CD4-positive, alpha-beta memory T cell (primary cell): ENCODE measurements at regions of chr15 and their contacts with region 1.

Region 1: DNA sequence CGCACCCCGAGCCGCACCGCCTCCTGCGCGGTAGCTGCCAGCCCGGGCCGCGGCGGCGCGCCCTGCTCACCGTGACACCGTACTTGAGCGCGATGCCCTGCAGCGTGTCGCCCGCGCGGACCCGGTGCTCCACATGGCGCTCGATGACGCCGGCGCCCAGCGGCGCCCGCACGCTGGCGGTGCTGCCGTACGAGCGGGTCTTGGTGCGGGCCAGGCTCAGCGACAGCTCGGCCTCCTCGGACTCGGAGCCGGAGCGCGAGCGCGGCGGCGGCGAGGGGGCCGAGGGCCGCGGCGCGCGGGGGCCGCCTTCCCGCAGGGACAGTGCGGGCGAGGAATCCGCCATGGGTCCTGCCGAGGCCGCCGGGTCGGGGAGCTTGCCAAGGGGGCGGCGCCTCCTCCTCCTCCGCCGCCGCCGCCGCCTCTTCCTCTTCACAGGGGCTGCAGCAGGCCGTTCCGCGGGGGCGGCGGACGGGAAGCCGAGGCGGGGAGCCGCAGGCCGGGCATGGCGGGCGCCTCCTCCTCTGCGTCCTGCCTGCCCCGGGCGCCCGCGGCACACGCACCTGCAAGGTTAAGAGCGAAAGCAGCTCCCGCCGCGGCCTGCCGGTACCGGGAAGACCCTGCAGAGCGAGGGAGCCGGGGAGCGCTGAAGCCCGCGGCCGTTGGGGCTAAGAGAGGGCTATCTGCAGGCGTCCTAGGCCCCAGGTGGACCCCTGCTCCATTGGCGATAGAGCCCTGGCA is at the start of gene LYSMD2:
- DNase-seq: peak; percentile 66 to 75 (median 72)
- H3K4me3 ChIP-seq: peak within 1 kb of the TSS; percentile 57 to 62
- H3K4me3 Mint-ChIP-seq: peak within 1 kb of the TSS; percentile 90 to 97 (median 92)
- H3K27ac ChIP-seq: peak within 1 kb of the TSS; percentile 65
- H3K27ac Mint-ChIP-seq: peak within 1 kb of the TSS; percentile 97 to 98 (median 98)
- H3K4me1 ChIP-seq: peaks cover 66% of the 10 kb centered on the region
- H3K4me1 Mint-ChIP-seq: peaks cover 45 to 66% (median 53%) of the 10 kb centered on the region in 4 donors
- H3K27me3 ChIP-seq: no peaks in the 10 kb centered on the region
- H3K27me3 Mint-ChIP-seq: no peaks in the 10 kb centered on the region
- total RNA-seq, gene LYSMD2: 33.0 to 35.2 TPM

Region 2: DNA sequence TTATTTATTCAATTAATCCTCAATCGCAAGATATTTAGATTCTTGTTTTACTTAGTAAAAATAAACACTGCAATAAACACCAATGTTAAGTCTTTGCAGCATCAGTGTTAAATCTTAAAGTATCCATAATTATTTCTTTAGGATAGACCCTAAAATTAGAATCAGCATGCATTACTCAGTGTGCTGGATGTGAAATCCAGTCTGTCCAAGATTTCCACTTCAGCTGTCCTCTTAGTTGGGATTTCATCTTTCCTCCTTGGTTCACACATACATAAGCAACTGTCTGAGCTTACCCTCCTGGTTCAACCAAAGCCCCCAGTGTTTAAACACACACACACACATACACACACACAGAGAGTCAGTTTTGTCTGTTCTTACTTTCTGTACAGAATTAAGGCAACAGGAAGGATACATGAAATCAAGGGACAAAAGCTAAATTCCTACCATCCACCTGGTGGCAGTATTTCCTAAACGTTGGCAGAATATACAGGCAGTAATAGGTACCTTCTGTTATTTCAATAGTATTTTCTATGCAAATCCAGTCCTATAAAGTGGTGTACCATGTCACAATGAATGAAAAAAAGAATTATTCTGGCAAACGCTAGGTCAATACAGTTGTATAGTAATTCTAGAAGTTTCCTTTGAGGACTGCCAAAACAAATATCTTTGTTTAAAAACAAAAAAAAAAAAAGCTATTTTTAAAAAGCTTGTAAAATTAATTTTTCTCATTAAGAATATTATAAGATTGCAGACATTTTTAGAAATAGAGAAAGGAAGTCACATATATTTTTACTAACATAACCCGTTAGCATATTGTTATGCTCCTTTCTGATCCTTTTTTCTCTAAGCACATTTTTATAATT is 87.6 kb before region 1 on chr15:
- CTCF ChIA-PET with region 1: interaction called, 25 read pairs
- POLR2A ChIA-PET with region 1: interaction called, 7 read pairs
- intact Hi-C with region 1: loop called (anchors 1 kb)
- DNase-seq: peak; percentile 65 to 72 (median 68)
- H3K4me3 ChIP-seq: no peak overlapping the region
- H3K4me3 Mint-ChIP-seq: no peak overlapping the region
- H3K27ac ChIP-seq: no peak overlapping the region
- H3K27ac Mint-ChIP-seq: no peak overlapping the region
- H3K4me1 ChIP-seq: no peaks in the 10 kb centered on the region
- H3K4me1 Mint-ChIP-seq: no peaks in the 10 kb centered on the region
- H3K27me3 ChIP-seq: no peaks in the 10 kb centered on the region
- H3K27me3 Mint-ChIP-seq: no peaks in the 10 kb centered on the region

Region 3: DNA sequence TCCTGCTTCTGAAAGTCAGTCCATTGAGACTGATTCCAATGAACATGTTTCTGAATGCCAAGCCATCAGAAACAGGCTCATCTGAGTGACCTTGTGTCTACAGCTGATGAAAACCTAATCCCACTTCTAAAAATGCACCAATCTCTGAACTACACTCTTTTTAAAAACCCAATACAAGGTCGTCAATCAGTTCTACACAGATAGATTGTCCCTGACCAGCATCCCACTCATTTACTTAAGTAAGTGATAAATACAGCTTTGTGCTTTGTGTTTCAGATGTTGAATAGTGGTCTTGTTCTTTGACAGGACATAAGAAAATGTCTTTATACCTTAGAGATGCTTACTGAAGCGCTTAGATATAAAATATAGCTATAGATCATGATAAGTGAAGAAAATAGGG is 76.4 kb before region 1 on chr15:
- CTCF ChIA-PET with region 1: no interaction called
- POLR2A ChIA-PET with region 1: no interaction called
- intact Hi-C with region 1: no loop called
- DNase-seq: no peak
- H3K4me3 ChIP-seq: no peak overlapping the region
- H3K4me3 Mint-ChIP-seq: no peak overlapping the region
- H3K27ac ChIP-seq: no peak overlapping the region
- H3K27ac Mint-ChIP-seq: no peak overlapping the region
- H3K4me1 ChIP-seq: no peaks in the 10 kb centered on the region
- H3K4me1 Mint-ChIP-seq: no peaks in the 10 kb centered on the region
- H3K27me3 ChIP-seq: no peaks in the 10 kb centered on the region
- H3K27me3 Mint-ChIP-seq: peaks cover 0 to 3% of the 10 kb centered on the region in 2 donors

Region 4: DNA sequence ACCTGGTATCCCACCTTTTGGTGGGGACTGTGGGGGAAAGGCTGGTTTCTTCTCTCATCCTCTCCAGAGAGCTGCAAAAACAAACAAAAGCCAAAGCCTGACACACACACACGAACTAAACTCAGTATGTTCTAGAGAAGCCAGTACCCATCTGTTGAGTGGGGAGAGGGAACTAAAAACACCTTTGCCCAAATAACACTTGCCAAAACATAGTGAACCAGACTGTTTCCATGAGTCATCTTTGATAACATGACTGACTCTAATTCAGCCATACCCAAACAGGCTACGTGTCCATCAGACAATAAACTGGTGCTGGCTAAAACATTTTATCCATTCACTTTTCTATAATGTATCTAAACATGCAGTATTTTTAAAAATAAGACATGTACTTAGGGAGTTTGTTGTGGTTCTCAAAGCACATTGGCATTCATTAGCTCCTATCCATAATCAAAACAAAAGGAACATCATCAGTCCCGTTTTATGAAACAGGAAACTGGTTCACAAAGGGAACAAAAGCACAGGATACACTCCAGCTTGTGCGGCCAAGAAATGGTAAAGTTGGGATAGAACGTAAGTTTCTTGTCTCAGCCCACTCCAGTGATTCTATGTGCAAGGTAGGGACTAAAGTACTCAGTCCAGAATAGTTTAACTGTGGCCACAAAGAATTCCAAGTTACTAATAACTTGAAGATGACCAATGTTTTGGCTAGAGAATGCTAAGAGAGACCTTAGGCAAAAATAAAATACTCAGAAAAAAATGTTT is 16.1 kb before region 1 on chr15:
- CTCF ChIA-PET with region 1: interaction called, 3 read pairs
- POLR2A ChIA-PET with region 1: interaction called, 29 read pairs
- intact Hi-C with region 1: loop called (anchors 1 kb)
- DNase-seq: no peak
- H3K4me3 ChIP-seq: no peak overlapping the region
- H3K4me3 Mint-ChIP-seq: no peak overlapping the region
- H3K27ac ChIP-seq: no peak overlapping the region
- H3K27ac Mint-ChIP-seq: peak overlapping the region in 2 of 7 donors; percentile 19 to 41
- H3K4me1 ChIP-seq: peaks cover 27% of the 10 kb centered on the region
- H3K4me1 Mint-ChIP-seq: peaks cover 18 to 33% (median 23%) of the 10 kb centered on the region in 4 donors
- H3K27me3 ChIP-seq: no peaks in the 10 kb centered on the region
- H3K27me3 Mint-ChIP-seq: no peaks in the 10 kb centered on the region

Region 5: DNA sequence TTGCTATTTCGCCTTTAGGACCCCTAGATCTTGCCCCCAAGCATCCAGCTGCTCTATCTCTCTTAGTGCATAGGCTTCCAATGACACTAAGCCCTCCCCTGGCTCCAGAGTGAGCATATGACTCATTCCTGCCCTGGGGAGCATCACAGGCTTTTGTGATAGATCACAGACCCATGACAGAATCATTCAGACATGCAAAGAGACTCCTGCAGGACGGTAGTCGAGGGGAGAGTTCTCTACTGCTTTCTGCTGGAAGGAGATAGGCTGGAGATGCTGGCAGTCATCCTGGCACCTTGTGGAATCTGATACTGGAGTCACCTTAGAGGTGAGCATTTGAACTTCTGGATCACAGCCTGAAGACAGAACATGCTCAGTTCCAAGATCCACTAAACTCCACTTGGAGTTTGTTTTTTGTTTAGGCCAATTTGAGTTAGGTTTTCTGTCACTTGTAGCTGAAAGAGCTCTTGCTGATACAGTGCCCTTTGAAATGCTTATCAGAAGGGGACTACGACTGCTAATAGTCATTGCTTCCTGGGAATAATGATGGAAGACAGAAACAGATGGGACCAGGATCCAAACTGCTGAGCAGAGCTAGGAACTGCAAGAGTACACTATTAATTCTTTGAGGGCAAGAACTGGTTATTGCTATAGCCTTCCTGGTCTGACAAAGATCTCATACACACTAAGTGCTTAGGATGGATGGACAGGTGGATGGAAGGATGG is 10.9 kb before region 1 on chr15:
- CTCF ChIA-PET with region 1: interaction called, 3 read pairs
- POLR2A ChIA-PET with region 1: interaction called, 29 read pairs
- intact Hi-C with region 1: loop called (anchors 1 kb)
- DNase-seq: peak in 1 of 5 donors; percentile 60
- H3K4me3 ChIP-seq: no peak overlapping the region
- H3K4me3 Mint-ChIP-seq: peak overlapping the region in 1 of 8 donors; percentile 70
- H3K27ac ChIP-seq: no peak overlapping the region
- H3K27ac Mint-ChIP-seq: peak overlapping the region; percentile 69 to 98 (median 83)
- H3K4me1 ChIP-seq: peaks cover 66% of the 10 kb centered on the region
- H3K4me1 Mint-ChIP-seq: peaks cover 46 to 76% (median 59%) of the 10 kb centered on the region in 4 donors
- H3K27me3 ChIP-seq: no peaks in the 10 kb centered on the region
- H3K27me3 Mint-ChIP-seq: no peaks in the 10 kb centered on the region

Region 6: GRCh38 chr15:51750792-51751685 is 13.6 kb after region 1 on chr15 and contains the start of gene TMOD2:
- CTCF ChIA-PET with region 1: interaction called, 21 read pairs
- POLR2A ChIA-PET with region 1: interaction called, 31 read pairs
- intact Hi-C with region 1: loop called (anchors 1 kb)
- DNase-seq: peak; percentile 42 to 59 (median 51)
- H3K4me3 ChIP-seq: peak within 1 kb of the TSS in 1 of 2 donors; percentile 58
- H3K4me3 Mint-ChIP-seq: peak within 1 kb of the TSS; percentile 86 to 95 (median 88)
- H3K27ac ChIP-seq: no peak within 1 kb of the TSS
- H3K27ac Mint-ChIP-seq: peak within 1 kb of the TSS; percentile 22 to 91 (median 74)
- H3K4me1 ChIP-seq: peaks cover 30% of the 10 kb centered on the region
- H3K4me1 Mint-ChIP-seq: peaks cover 17 to 50% (median 34%) of the 10 kb centered on the region in 4 donors
- H3K27me3 ChIP-seq: no peaks in the 10 kb centered on the region
- H3K27me3 Mint-ChIP-seq: peaks cover 2 to 6% of the 10 kb centered on the region in 2 donors
- total RNA-seq, gene TMOD2: 20.0 to 20.3 TPM

Region 7: DNA sequence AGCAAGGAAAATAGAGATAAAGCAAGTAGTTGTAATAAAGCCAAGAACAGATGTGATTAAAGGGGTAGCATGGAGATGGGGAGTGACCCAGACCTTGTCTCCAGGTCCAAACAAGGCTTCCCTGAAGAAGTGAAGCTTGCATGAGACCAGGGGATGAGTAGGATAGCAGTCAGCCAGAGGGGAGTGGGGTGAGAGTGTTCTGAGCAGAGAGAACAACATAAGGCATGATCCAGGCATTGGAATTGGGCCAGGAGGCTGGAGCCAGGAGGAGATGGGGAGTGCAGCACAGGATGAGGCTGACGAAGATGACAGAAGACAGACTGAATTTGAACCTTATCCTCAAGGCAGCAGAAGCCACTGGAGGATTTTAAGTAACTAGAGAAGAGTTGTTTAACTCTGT is 21.2 kb after region 1 on chr15:
- CTCF ChIA-PET with region 1: interaction called, 21 read pairs
- POLR2A ChIA-PET with region 1: interaction called, 13 read pairs
- intact Hi-C with region 1: no loop called
- DNase-seq: no peak
- H3K4me3 ChIP-seq: no peak overlapping the region
- H3K4me3 Mint-ChIP-seq: no peak overlapping the region
- H3K27ac ChIP-seq: no peak overlapping the region
- H3K27ac Mint-ChIP-seq: peak overlapping the region in 1 of 7 donors; percentile 40
- H3K4me1 ChIP-seq: peaks cover 8% of the 10 kb centered on the region
- H3K4me1 Mint-ChIP-seq: peaks cover 11 to 23% (median 15%) of the 10 kb centered on the region in 4 donors
- H3K27me3 ChIP-seq: no peaks in the 10 kb centered on the region
- H3K27me3 Mint-ChIP-seq: no peaks in the 10 kb centered on the region

Region 8: GRCh38 chr15:51829360-51830275 is 92.2 kb after region 1 on chr15 and contains the start of gene TMOD3:
- CTCF ChIA-PET with region 1: no interaction called
- POLR2A ChIA-PET with region 1: interaction called, 7 read pairs
- intact Hi-C with region 1: loop called (anchors 10 kb)
- DNase-seq: peak; percentile 84 to 89 (median 86)
- H3K4me3 ChIP-seq: peak within 1 kb of the TSS; percentile 85 to 91
- H3K4me3 Mint-ChIP-seq: peak within 1 kb of the TSS; percentile 92 to 99 (median 98)
- H3K27ac ChIP-seq: peak within 1 kb of the TSS; percentile 75
- H3K27ac Mint-ChIP-seq: peak within 1 kb of the TSS; percentile 91 to 98 (median 95)
- H3K4me1 ChIP-seq: peaks cover 38% of the 10 kb centered on the region
- H3K4me1 Mint-ChIP-seq: peaks cover 32 to 52% (median 42%) of the 10 kb centered on the region in 4 donors
- H3K27me3 ChIP-seq: no peaks in the 10 kb centered on the region
- H3K27me3 Mint-ChIP-seq: no peaks in the 10 kb centered on the region
- total RNA-seq, gene TMOD3: 53.6 to 59.3 TPM

Region 9: GRCh38 chr15:51849860-51850259 is 112.4 kb after region 1 on chr15:
- CTCF ChIA-PET with region 1: no interaction called
- POLR2A ChIA-PET with region 1: no interaction called
- intact Hi-C with region 1: no loop called
- DNase-seq: no peak
- H3K4me3 ChIP-seq: no peak overlapping the region
- H3K4me3 Mint-ChIP-seq: peak overlapping the region in 1 of 8 donors; percentile 22
- H3K27ac ChIP-seq: no peak overlapping the region
- H3K27ac Mint-ChIP-seq: peak overlapping the region in 6 of 7 donors; percentile 11 to 61 (median 29)
- H3K4me1 ChIP-seq: peaks cover 49% of the 10 kb centered on the region
- H3K4me1 Mint-ChIP-seq: peaks cover 51 to 85% (median 66%) of the 10 kb centered on the region in 4 donors
- H3K27me3 ChIP-seq: no peaks in the 10 kb centered on the region
- H3K27me3 Mint-ChIP-seq: no peaks in the 10 kb centered on the region